PC-3 (cell line): ENCODE measurements at regions of chr12 and their contacts with region 1.

Region 1: GRCh38 chr12:62603061-62603810 is 136.6 kb downstream of the MON2 start:
- DNase-seq: peak; percentile 89
- ATAC-seq: peak; percentile 78
- H3K4me3 ChIP-seq: peak overlapping the region; percentile 92
- H3K27ac ChIP-seq: peak overlapping the region; percentile 99
- H3K4me1 ChIP-seq: peaks cover 39% of the 10 kb centered on the region
- H3K27me3 ChIP-seq: no peaks in the 10 kb centered on the region
- CTCF ChIP-seq: peak; percentile 44

Region 2: GRCh38 chr12:62435303-62436163 is 167.7 kb before region 1 on chr12:
- CTCF ChIA-PET with region 1: interaction called, 4 read pairs
- POLR2A ChIA-PET with region 1: no interaction called
- intact Hi-C with region 1: loop called (anchors 1 kb)
- DNase-seq: peak; percentile 77
- ATAC-seq: peak; percentile 89
- H3K4me3 ChIP-seq: peak overlapping the region; percentile 70
- H3K27ac ChIP-seq: no peak overlapping the region
- H3K4me1 ChIP-seq: no peaks in the 10 kb centered on the region
- H3K27me3 ChIP-seq: 0 out of 2 replicates have a peak, but pooled peaks cover 5% of the 10 kb centered on the region
- CTCF ChIP-seq: peak; percentile 67

Region 3: GRCh38 chr12:62522984-62523383 is 80.3 kb before region 1 on chr12:
- CTCF ChIA-PET with region 1: no interaction called
- POLR2A ChIA-PET with region 1: no interaction called
- intact Hi-C with region 1: no loop called
- DNase-seq: peak; percentile 18
- ATAC-seq: peak; percentile 62
- H3K4me3 ChIP-seq: no peak overlapping the region
- H3K27ac ChIP-seq: no peak overlapping the region
- H3K4me1 ChIP-seq: no peaks in the 10 kb centered on the region
- H3K27me3 ChIP-seq: no peaks in the 10 kb centered on the region
- CTCF ChIP-seq: peak; percentile 43; the same call in 1 of the 2 replicates

Region 4: GRCh38 chr12:62640910-62641448 is 37.7 kb after region 1 on chr12:
- CTCF ChIA-PET with region 1: interaction called, 3 read pairs
- POLR2A ChIA-PET with region 1: interaction called, 7 read pairs
- intact Hi-C with region 1: loop called (anchors 1 kb)
- DNase-seq: peak; percentile 27
- ATAC-seq: peak; percentile 67
- H3K4me3 ChIP-seq: no peak overlapping the region
- H3K27ac ChIP-seq: peak overlapping the region; percentile 68
- H3K4me1 ChIP-seq: peaks cover 16% of the 10 kb centered on the region
- H3K27me3 ChIP-seq: no peaks in the 10 kb centered on the region
- CTCF ChIP-seq: no peak

Region 5: DNA sequence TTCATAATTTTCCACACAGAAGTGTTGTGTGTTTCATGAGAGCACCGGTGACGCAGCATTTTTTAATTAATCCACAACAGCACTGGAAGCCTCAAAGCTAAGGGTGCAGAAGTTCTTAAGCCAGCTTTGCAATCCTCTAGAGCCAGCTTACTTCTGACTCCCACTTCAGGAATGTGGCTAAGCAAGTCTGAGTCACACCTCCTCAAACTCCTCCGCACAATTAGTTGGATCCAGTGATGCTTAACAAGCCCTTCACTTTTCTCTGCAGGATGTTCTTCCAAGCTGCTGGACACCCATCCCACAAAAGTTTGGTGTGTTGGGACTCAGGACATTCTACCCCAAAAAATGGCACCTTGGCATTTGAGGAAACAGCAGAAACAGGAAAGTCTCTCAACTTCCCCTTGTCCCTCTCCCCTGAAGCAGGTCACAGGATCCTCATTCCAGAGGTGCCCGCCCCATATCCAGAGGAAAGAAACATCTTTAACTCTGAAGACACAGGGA is 121.8 kb after region 1 on chr12:
- CTCF ChIA-PET with region 1: no interaction called
- POLR2A ChIA-PET with region 1: no interaction called
- intact Hi-C with region 1: loop called (anchors 5 kb)
- DNase-seq: peak; percentile 98
- ATAC-seq: peak; percentile 92
- H3K4me3 ChIP-seq: peak overlapping the region; percentile 26; the same call in 1 of the 2 replicates
- H3K27ac ChIP-seq: peak overlapping the region; percentile 81
- H3K4me1 ChIP-seq: peaks cover 55% of the 10 kb centered on the region
- H3K27me3 ChIP-seq: no peaks in the 10 kb centered on the region
- CTCF ChIP-seq: no peak

Region 6: DNA sequence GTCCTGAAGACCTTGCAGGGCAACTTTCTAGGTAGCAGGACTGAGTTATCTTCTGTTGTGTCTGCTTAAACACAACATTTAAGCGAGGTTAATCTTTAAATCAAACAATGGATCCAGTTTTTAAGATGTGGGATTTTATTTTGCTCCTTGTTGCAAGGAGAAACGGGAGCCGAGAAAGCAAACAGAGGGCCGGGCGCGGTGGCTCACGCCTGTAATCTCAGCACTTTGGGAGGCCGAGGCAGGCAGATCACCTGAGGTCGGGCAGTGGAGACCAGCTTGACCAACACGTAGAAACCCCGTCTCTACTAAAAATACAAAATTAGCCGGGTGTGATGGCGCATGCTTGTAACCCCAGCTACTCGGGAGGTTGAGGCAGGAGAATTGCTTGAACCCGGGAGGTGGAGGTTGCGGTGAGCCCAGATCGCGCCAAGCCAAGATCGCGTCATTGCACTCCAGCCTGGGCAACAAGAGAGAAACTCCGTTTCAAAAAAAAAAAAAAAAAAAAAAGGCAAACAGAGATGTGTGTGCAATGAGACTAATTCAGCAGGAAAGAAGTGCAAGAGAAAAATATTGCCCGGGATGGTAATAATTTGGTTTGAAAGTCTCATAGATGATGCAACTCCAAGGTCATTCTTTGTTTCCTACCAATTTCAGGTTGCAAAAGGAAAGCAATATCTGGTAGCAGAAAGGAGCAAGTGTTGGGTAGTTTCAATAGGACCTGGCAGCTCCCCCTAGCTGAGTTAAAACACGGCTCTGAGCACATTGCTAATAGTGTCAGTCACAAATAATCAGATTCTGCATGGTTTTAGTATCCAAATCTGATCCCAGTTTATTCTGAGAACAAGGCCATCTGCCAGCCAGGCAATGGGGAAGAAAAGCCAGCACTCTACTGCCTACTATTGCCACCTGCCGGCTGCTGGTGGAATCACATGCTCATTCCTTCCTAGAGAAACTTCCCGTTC is 190.3 kb after region 1 on chr12:
- CTCF ChIA-PET with region 1: interaction called, 20 read pairs
- POLR2A ChIA-PET with region 1: interaction called, 15 read pairs
- intact Hi-C with region 1: loop called (anchors 1 kb)
- DNase-seq: peak; percentile 90
- ATAC-seq: peak; percentile 91
- H3K4me3 ChIP-seq: no peak overlapping the region
- H3K27ac ChIP-seq: peak overlapping the region; percentile 59
- H3K4me1 ChIP-seq: peaks cover 19% of the 10 kb centered on the region
- H3K27me3 ChIP-seq: no peaks in the 10 kb centered on the region
- CTCF ChIP-seq: peak; percentile 93